CD4-positive, alpha-beta memory T cell (primary cell): ENCODE measurements at regions of chr2 and their contacts with region 1.

Region 1: GRCh38 chr2:149017116-149017985 is 21.1 kb upstream of the LYPD6B start:
- DNase-seq: peak; percentile 60 to 72 (median 65)
- H3K4me3 ChIP-seq: no peak overlapping the region
- H3K4me3 Mint-ChIP-seq: no peak overlapping the region
- H3K27ac ChIP-seq: no peak overlapping the region
- H3K27ac Mint-ChIP-seq: peak overlapping the region in 2 of 7 donors; percentile 26
- H3K4me1 ChIP-seq: no peaks in the 10 kb centered on the region
- H3K4me1 Mint-ChIP-seq: peaks cover 2 to 12% (median 6%) of the 10 kb centered on the region in 4 donors
- H3K27me3 ChIP-seq: no peaks in the 10 kb centered on the region
- H3K27me3 Mint-ChIP-seq: no peaks in the 10 kb centered on the region

Region 2: DNA sequence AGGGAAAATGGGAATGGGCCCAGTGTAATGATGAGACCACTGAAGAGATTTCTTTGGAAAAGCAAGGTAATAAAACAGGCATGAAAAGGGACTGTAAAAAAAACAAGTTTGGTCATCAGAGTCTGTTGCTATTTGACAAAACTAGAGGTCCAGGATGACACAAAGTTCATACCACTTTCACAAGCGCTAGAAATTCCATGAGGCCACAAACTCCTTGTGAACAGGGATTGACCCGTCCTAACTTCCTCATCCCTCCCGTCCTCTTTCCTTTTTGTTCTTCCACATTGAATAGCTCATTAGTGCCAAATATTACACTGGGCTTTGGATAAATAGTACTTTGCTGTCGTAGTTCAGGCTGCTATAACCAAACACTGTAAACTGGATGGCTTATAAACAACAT is 561.6 kb before region 1 on chr2:
- CTCF ChIA-PET with region 1: no interaction called
- POLR2A ChIA-PET with region 1: no interaction called
- intact Hi-C with region 1: no loop called
- DNase-seq: no peak
- H3K4me3 ChIP-seq: no peak overlapping the region
- H3K4me3 Mint-ChIP-seq: no peak overlapping the region
- H3K27ac ChIP-seq: no peak overlapping the region
- H3K27ac Mint-ChIP-seq: no peak overlapping the region
- H3K4me1 ChIP-seq: no peaks in the 10 kb centered on the region
- H3K4me1 Mint-ChIP-seq: no peaks in the 10 kb centered on the region
- H3K27me3 ChIP-seq: no peaks in the 10 kb centered on the region
- H3K27me3 Mint-ChIP-seq: no peaks in the 10 kb centered on the region

Region 3: GRCh38 chr2:149000158-149000938 is 17.0 kb before region 1 on chr2:
- CTCF ChIA-PET with region 1: interaction called, 12 read pairs
- POLR2A ChIA-PET with region 1: no interaction called
- intact Hi-C with region 1: no loop called
- DNase-seq: no peak
- H3K4me3 ChIP-seq: no peak overlapping the region
- H3K4me3 Mint-ChIP-seq: no peak overlapping the region
- H3K27ac ChIP-seq: no peak overlapping the region
- H3K27ac Mint-ChIP-seq: peak overlapping the region in 1 of 7 donors; percentile 4
- H3K4me1 ChIP-seq: no peaks in the 10 kb centered on the region
- H3K4me1 Mint-ChIP-seq: no peaks in the 10 kb centered on the region
- H3K27me3 ChIP-seq: no peaks in the 10 kb centered on the region
- H3K27me3 Mint-ChIP-seq: no peaks in the 10 kb centered on the region

Region 4: GRCh38 chr2:149033716-149034115 is 16.4 kb after region 1 on chr2:
- CTCF ChIA-PET with region 1: interaction called, 98 read pairs
- POLR2A ChIA-PET with region 1: no interaction called
- intact Hi-C with region 1: no loop called
- DNase-seq: no peak
- H3K4me3 ChIP-seq: no peak overlapping the region
- H3K4me3 Mint-ChIP-seq: no peak overlapping the region
- H3K27ac ChIP-seq: no peak overlapping the region
- H3K27ac Mint-ChIP-seq: no peak overlapping the region
- H3K4me1 ChIP-seq: no peaks in the 10 kb centered on the region
- H3K4me1 Mint-ChIP-seq: peaks cover 2 to 11% (median 5%) of the 10 kb centered on the region in 4 donors
- H3K27me3 ChIP-seq: peaks cover 10% of the 10 kb centered on the region
- H3K27me3 Mint-ChIP-seq: peaks cover 7 to 25% of the 10 kb centered on the region in 2 donors

Region 5: DNA sequence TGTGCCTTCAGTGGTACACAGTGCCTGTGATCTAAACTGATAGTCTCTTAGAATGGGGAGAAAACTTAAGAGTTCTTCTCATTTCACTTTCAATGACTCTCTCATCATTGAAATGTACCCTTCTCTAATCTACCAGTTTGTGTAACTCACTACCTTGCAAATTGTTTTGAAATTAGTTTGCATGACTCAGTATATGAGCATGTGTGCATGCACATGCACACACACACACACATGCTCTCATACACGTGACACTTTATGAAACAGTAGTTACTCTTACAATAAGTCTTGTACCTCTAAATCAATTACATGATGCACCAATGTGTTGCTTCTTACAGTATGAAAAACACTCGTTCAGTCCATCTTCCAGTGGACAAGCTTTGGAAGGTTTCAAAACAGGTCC is 31.8 kb after region 1 on chr2:
- CTCF ChIA-PET with region 1: interaction called, 11 read pairs
- POLR2A ChIA-PET with region 1: no interaction called
- intact Hi-C with region 1: no loop called
- DNase-seq: no peak
- H3K4me3 ChIP-seq: no peak overlapping the region
- H3K4me3 Mint-ChIP-seq: no peak overlapping the region
- H3K27ac ChIP-seq: no peak overlapping the region
- H3K27ac Mint-ChIP-seq: no peak overlapping the region
- H3K4me1 ChIP-seq: no peaks in the 10 kb centered on the region
- H3K4me1 Mint-ChIP-seq: no peaks in the 10 kb centered on the region
- H3K27me3 ChIP-seq: no peaks in the 10 kb centered on the region
- H3K27me3 Mint-ChIP-seq: peaks cover 9 to 15% of the 10 kb centered on the region in 2 donors

Region 6: GRCh38 chr2:149125002-149125725 is 107.8 kb after region 1 on chr2:
- CTCF ChIA-PET with region 1: no interaction called
- POLR2A ChIA-PET with region 1: no interaction called
- intact Hi-C with region 1: no loop called
- DNase-seq: no peak
- H3K4me3 ChIP-seq: no peak overlapping the region
- H3K4me3 Mint-ChIP-seq: no peak overlapping the region
- H3K27ac ChIP-seq: no peak overlapping the region
- H3K27ac Mint-ChIP-seq: no peak overlapping the region
- H3K4me1 ChIP-seq: no peaks in the 10 kb centered on the region
- H3K4me1 Mint-ChIP-seq: peaks cover 0 to 3% (median 0%) of the 10 kb centered on the region in 4 donors
- H3K27me3 ChIP-seq: no peaks in the 10 kb centered on the region
- H3K27me3 Mint-ChIP-seq: peaks cover 2 to 7% of the 10 kb centered on the region in 2 donors

Region 7: GRCh38 chr2:149561309-149561926 is 544.1 kb after region 1 on chr2:
- CTCF ChIA-PET with region 1: interaction called, 60 read pairs
- POLR2A ChIA-PET with region 1: interaction called, 4 read pairs
- intact Hi-C with region 1: no loop called
- DNase-seq: peak in 4 of 5 donors; percentile 35 to 45 (median 40)
- H3K4me3 ChIP-seq: no peak overlapping the region
- H3K4me3 Mint-ChIP-seq: no peak overlapping the region
- H3K27ac ChIP-seq: no peak overlapping the region
- H3K27ac Mint-ChIP-seq: no peak overlapping the region
- H3K4me1 ChIP-seq: no peaks in the 10 kb centered on the region
- H3K4me1 Mint-ChIP-seq: peaks cover 0 to 3% (median 1%) of the 10 kb centered on the region in 4 donors
- H3K27me3 ChIP-seq: no peaks in the 10 kb centered on the region
- H3K27me3 Mint-ChIP-seq: peaks cover 1 to 2% of the 10 kb centered on the region in 2 donors

Region 8: DNA sequence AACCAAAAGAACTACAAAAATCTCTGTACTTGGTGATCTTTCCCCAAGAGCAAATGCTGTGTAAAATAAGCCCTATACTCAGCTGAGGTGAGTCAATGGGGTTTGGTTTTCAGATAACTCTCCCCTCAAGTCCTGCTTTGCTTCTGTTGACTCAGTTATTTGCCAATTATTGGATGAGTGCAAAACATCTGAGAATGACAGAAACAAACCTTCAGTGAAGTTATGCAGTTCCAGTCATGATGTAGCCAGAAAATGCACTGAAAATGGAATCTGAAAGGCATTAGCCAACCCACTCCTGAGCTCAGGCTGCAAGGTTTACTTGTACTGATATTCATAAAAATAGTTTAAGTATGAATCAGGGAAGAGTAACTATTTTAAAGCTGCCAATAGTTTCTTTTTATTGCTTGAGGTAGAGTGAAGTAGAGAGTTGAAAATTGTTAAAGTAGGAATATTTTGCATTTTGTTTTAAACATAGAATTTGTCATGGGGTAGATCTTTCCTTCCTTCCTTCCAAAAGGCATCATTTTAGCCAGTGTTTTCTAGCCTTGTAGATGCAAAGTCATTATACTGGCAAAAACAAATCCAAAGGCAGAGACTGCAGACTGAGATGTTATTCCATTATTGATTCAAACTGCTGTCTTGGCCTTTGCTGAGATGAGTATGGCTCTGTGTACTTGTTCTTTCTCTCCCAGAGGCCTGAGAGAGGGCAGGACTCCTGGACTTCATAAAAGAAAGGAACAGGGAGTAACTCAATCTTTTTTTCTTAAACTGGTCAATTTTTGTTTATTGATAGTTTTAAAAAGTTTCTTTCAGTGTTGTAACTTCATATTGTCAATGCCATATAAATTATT is 1254.8 kb after region 1 on chr2:
- CTCF ChIA-PET with region 1: no interaction called
- POLR2A ChIA-PET with region 1: no interaction called
- intact Hi-C with region 1: no loop called
- DNase-seq: no peak
- H3K4me3 ChIP-seq: no peak overlapping the region
- H3K4me3 Mint-ChIP-seq: no peak overlapping the region
- H3K27ac ChIP-seq: no peak overlapping the region
- H3K27ac Mint-ChIP-seq: no peak overlapping the region
- H3K4me1 ChIP-seq: no peaks in the 10 kb centered on the region
- H3K4me1 Mint-ChIP-seq: no peaks in the 10 kb centered on the region
- H3K27me3 ChIP-seq: no peaks in the 10 kb centered on the region
- H3K27me3 Mint-ChIP-seq: no peaks in the 10 kb centered on the region